ENCODE measurements at regions of chr10 and their contacts with region 1.

Region 1: GRCh38 chr10:20891338-20891714 is 5.8 kb downstream of the NEBL start:
- DNase-seq: no peak
- ATAC-seq: peak; percentile 55

Region 2: DNA sequence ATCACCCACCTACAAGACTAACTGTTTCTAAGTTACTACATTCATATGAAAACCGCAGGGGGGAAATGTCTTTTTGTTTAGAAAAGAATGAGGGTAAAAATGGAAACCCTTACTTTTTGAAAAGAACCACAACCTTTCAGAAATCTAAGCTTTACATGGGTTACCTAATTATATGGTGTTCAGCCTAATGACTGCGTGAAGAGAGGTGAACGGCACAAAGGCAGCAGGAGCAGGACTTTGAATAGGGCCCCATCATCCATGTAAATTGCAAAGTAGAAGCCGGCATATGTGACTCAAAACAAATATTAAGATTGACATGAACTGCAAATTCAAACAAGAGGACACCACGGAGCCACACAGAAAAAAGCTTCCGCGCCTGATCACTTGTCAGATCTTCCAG is 19.4 kb before region 1 on chr10:
- intact Hi-C with region 1: no loop called
- DNase-seq: no peak
- ATAC-seq: no peak

Region 3: DNA sequence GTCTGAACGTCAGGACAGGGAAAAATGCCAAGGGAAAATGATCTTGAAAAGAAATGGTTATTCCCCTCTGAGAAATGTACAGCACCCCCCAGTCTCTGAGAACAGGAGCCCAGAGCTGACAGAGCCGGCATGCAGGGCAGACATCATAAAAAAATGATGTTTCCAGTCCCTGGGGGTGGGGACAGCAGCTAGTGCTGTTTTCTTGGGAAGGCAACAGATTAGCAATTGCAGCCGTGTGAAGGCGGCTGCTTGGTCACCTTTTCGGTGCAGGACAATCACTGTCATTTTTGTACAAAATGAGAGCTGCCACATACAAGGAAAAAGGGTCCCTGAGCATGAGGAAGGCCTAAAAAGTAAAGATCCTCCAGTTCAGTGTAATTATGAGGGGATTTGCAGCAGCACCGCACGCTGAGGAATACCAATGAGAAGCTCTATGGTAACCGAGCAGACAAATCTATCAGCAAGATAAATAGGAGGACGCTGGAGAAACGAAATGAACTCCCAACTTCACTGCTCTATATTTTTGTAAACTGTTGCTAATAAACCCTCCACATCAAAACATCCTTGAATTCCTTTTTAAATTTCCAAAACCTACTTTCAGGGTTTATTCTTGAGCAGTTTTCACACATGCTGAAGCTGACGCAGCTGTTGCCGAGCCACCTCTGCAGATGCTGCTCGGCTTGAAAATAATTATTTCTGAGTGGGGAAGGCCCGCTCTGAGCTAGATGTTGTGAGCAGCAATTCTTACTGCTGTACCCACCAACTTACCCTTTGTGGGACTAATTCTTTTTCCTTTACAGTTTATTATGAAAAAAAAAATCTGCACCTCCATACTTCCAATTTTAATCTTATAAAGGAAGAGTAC is 104.0 kb after region 1 on chr10:
- intact Hi-C with region 1: loop called (anchors 5 kb)
- DNase-seq: no peak
- ATAC-seq: peak; percentile 37

Region 4: GRCh38 chr10:21150166-21150565 is 258.8 kb after region 1 on chr10:
- intact Hi-C with region 1: no loop called
- DNase-seq: no peak
- ATAC-seq: no peak

Region 5: DNA sequence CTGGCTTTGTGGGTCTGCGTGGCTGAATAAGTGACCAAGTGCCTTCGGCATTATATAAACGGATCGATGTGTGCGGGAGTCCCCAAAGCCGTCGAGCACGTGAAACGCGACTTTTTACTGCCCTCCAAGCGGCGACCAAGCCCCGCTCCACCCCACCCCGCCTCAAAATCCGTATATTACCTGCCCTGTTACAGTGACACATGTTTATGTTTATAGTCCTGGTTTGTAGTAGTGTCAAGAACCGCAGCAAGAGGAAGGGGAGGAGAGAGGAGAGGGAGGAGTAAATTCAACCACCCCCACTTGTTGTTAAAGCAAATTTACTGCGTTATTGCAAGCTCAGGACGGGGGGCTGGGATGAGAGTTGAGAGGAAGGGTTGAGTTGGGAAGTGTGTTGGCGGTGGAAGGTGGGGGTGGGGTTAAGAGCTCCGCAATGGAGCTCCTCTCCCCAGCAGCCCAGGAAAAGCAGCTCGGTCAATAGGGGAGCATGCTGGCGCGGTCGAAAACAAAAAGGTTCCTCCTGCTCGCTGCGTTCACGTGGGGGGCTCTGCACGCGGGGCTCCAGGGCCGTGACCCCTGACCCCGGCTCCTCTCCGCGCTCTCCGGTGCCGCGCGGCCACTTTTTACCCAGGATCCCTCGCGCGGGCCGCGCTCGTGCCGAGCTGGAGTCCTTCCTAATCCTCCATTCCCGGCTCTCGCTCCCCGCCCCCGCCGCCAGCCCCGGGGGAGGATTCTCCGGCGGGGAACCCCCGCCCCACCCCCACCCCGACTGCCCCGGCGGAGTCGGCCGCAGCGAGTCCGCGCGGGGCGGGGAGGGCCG is 634.2 kb after region 1 on chr10 and contains the start of gene SKIDA1:
- intact Hi-C with region 1: loop called (anchors 10 kb)
- DNase-seq: peak; percentile 94
- ATAC-seq: peak; percentile 87
- total RNA-seq, gene SKIDA1: 2.6 TPM